Pancreas (tissue), 10 donors: ENCODE measurements at regions of chr13 and their contacts with region 1.

Region 1: GRCh38 chr13:30132623-30133553 is 174.5 kb downstream of the KATNAL1 start:
- DNase-seq: peak; percentile 86 to 100 (median 96)
- ATAC-seq: peak; percentile 97 to 99 (median 99)
- H3K4me3 ChIP-seq: no peak overlapping the region
- H3K27ac ChIP-seq: no peak overlapping the region
- H3K4me1 ChIP-seq: no peaks in the 10 kb centered on the region
- H3K27me3 ChIP-seq: no peaks in the 10 kb centered on the region
- CTCF ChIP-seq: peak; percentile 82 to 92 (median 90)

Region 2: GRCh38 chr13:30388406-30389283 is 255.8 kb after region 1 on chr13:
- intact Hi-C with region 1: loop called in 1 of 3 experiments (anchors 10 kb)
- DNase-seq: no peak
- ATAC-seq: peak in 1 of 4 donors; percentile 29
- H3K4me3 ChIP-seq: no peak overlapping the region
- H3K27ac ChIP-seq: no peak overlapping the region
- H3K4me1 ChIP-seq: no peaks in the 10 kb centered on the region
- H3K27me3 ChIP-seq: no peaks in the 10 kb centered on the region
- CTCF ChIP-seq: no peak

Region 3: DNA sequence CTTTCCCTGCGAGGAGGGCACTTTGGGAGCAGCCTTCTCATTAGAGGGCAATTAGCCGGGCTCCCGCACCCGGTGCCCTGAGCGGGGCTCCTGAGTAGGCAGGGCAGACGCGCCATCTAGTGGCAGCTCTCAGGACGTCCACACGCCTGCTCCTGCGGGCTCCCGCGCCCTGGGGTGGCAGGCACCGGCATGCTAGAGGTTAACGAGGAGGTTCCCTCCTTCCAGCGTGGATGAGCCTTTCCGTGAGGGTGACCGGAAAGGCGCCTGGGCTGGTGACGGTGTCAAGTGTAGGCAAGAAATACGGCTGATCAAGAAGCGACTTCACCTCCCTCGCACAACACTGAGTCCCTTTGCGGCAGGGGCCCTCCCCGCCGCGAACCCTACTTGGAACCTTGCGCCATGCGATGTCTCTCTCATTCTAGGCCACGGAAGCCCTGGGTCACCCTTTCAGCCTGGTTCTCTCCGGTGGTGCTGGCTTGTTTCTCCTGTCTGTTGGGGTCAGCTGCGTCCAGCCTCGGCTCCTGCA is 670.1 kb after region 1 on chr13:
- intact Hi-C with region 1: loop called in 1 of 3 experiments (anchors 10 kb)
- DNase-seq: peak; percentile 67 to 92 (median 82)
- ATAC-seq: peak; percentile 92 to 98 (median 97)
- H3K4me3 ChIP-seq: peak overlapping the region in 2 of 4 donors; percentile 21 to 40
- H3K27ac ChIP-seq: peak overlapping the region in 2 of 4 donors; percentile 2 to 30
- H3K4me1 ChIP-seq: peaks cover 0 to 14% (median 4%) of the 10 kb centered on the region in 3 donors
- H3K27me3 ChIP-seq: no peaks in the 10 kb centered on the region
- CTCF ChIP-seq: peak; percentile 81 to 97 (median 91)

Region 4: DNA sequence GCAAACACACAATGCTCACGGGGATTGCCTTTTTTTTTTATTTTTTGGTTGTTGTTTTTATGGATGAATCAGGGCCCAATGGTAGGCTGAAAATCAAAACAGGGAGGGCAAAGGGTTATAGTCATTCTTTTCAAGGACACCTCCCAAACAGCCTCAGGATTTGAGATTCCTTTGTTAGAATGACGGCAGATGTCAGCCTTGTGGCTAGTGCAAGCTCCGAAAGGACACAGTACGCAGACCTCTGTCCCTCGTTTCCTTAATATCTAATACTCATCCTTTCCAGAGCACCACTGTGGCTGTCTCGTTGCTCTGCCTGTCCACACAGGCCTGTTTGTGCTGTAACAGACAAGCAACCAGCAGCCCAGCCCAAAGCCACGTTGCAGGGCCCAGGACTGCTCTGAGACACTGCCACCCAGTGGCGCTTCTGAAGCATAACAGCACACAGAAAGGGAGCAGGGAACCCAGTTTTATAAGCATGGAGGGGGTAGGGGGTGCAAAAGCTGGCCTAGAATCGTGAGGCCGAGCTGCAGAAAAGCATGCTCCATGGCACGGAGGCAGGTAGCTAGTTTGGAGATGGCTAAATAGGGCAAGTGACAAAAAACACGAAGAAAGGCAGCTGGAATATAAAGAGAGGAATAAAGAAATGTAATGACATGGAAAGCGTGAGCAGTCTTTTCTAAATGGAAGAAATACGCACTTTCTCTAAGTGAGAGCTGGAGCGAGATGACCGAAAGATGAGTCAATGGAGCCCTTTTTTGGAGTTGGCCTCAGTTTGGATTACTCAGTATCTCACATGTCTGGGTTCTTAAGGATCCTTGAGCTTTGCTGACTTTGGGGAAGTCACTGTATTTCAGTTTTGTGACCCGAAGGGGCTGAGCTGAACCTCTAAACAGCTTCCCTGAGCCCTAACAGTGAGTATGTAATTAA is 732.5 kb after region 1 on chr13:
- intact Hi-C with region 1: loop called in 1 of 3 experiments (anchors 10 kb)
- DNase-seq: peak; percentile 49 to 87 (median 70)
- ATAC-seq: peak; percentile 96 to 97 (median 97)
- H3K4me3 ChIP-seq: no peak overlapping the region
- H3K27ac ChIP-seq: peak overlapping the region in 2 of 4 donors; percentile 68 to 69
- H3K4me1 ChIP-seq: peaks cover 0 to 3% (median 0%) of the 10 kb centered on the region in 3 donors
- H3K27me3 ChIP-seq: no peaks in the 10 kb centered on the region
- CTCF ChIP-seq: peak; percentile 74 to 86 (median 82)

Region 5: DNA sequence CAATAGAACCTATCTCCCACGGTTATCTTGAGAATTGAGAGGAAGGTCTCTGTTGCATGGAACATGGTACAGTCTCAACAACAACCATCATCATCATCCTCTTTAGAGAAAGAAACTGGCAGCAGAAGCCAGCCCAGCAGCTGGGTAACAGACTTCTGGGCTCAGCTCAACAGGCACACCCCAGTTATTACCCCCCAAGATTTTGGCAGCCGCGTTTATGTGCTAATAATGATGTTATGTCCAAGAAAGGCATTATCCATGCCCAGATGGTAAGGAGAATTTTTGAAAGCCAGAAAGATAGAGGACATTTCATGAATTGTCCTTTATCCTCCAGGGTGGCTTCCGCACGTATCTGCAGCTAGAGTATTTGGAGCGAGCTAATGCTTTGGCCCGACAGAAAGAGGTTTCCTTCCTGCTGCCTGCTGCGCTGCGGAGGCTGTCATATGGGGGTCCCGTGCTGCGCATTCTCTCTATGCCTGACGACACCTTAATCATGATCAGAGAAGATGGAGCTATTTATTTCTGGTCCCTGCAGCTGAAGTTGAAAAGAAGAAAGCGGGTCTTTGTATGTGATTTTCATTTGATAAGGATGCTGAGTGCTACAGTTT is 889.5 kb after region 1 on chr13:
- intact Hi-C with region 1: no loop called
- DNase-seq: no peak
- ATAC-seq: no peak
- H3K4me3 ChIP-seq: no peak overlapping the region
- H3K27ac ChIP-seq: no peak overlapping the region
- H3K4me1 ChIP-seq: no peaks in the 10 kb centered on the region
- H3K27me3 ChIP-seq: peaks cover 0 to 3% (median 0%) of the 10 kb centered on the region in 4 donors
- CTCF ChIP-seq: no peak